ENCODE measurements at regions of chr4 and their contacts with region 1.

Region 1: DNA sequence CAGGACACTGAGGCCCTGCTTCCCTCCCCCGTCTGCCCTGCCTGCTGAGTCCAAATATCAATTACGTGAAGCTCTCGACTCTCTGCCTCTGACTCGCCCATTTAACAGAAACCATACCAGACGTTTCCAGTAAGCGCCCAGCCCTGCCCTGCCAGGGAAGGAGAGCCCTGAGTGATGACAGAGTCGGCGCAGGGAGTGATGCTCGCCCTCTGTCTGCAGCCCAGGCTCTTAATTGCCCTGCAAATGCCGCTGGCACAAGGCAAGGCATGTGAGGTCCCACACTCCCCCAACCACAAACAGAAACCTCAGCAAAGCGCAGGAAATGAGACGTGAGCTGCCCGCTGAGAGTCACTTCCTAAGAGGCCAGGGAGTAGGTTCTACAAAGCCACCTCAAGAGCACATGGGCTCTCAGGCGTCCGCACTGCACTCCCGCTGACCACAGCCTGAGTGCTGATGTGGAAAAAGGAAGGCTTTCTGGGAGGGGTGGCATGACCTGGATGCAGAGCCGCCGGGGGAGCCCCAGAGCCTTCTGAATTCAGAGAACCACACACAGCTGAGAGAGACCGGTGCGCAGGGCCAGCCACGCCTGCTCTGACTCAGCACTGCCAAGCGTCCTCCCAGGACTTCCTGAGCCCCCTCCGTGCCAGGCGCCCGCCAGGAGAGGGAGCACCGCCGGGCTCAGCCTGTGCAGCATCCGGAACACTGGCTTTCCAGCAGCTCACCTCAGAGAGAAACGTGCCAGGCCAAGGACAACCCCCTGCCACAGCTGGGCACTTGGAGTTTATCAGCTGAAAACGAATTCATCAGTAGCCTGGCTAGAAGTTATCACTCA is 5.3 kb downstream of the ZFYVE28 start:
- DNase-seq: peak; percentile 60 to 89 (median 85)
- ATAC-seq: peak; percentile 84
- H3K4me3 ChIP-seq: peak overlapping the region; percentile 29
- H3K4me3 Mint-ChIP-seq: peak overlapping the region; percentile 74 to 99 (median 84)
- H3K27ac ChIP-seq: peak overlapping the region; percentile 71
- H3K27ac Mint-ChIP-seq: peak overlapping the region; percentile 90 to 100 (median 96)
- H3K4me1 ChIP-seq: peaks cover 41 to 48% of the 10 kb centered on the region in 2 donors
- H3K4me1 Mint-ChIP-seq: peaks cover 35 to 75% (median 67%) of the 10 kb centered on the region in 7 donors
- H3K27me3 ChIP-seq: no peaks in the 10 kb centered on the region
- H3K27me3 Mint-ChIP-seq: peaks cover 0 to 25% (median 0%) of the 10 kb centered on the region in 5 donors

Region 2: DNA sequence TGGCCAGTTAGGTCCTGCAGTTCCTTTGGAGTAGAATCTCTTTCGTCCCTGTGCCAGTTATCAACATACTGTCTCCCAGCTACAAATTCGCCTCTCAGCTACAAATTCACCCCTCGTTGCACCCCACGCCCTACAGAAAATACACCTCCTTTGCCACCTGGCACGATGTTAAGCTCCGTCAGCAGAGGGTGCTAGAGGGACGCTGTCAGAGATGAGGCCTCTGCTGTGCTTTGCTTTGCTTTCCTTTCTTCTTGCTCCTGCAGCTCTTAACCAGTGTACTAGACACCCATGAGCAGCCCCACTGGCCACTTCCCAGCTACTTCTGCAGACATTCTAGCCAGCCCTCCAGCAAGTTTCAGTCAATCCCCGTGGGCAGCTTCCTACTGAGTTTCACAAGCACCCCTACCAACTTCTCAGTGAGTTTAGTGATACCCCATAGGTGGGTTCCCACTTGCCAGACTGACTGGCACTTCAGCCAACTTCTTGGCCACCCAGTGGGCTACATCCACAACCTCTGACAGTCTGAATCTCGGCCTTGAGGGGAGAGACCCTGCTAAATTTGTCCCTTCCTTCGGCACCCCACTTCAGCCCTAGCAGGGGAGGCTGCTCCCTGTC is 193.0 kb before region 1 on chr4:
- CTCF ChIA-PET with region 1: no interaction called
- POLR2A ChIA-PET with region 1: no interaction called
- intact Hi-C with region 1: loop called in 1 of 2 experiments (anchors 1 kb)
- DNase-seq: peak; percentile 61 to 84 (median 76)
- ATAC-seq: peak; percentile 96
- H3K4me3 ChIP-seq: no peak overlapping the region
- H3K4me3 Mint-ChIP-seq: no peak overlapping the region
- H3K27ac ChIP-seq: no peak overlapping the region
- H3K27ac Mint-ChIP-seq: peak overlapping the region in 2 of 9 donors; percentile 6 to 29
- H3K4me1 ChIP-seq: peaks cover 0 to 7% of the 10 kb centered on the region in 2 donors
- H3K4me1 Mint-ChIP-seq: peaks cover 0 to 17% (median 6%) of the 10 kb centered on the region in 7 donors
- H3K27me3 ChIP-seq: no peaks in the 10 kb centered on the region
- H3K27me3 Mint-ChIP-seq: no peaks in the 10 kb centered on the region

Region 3: DNA sequence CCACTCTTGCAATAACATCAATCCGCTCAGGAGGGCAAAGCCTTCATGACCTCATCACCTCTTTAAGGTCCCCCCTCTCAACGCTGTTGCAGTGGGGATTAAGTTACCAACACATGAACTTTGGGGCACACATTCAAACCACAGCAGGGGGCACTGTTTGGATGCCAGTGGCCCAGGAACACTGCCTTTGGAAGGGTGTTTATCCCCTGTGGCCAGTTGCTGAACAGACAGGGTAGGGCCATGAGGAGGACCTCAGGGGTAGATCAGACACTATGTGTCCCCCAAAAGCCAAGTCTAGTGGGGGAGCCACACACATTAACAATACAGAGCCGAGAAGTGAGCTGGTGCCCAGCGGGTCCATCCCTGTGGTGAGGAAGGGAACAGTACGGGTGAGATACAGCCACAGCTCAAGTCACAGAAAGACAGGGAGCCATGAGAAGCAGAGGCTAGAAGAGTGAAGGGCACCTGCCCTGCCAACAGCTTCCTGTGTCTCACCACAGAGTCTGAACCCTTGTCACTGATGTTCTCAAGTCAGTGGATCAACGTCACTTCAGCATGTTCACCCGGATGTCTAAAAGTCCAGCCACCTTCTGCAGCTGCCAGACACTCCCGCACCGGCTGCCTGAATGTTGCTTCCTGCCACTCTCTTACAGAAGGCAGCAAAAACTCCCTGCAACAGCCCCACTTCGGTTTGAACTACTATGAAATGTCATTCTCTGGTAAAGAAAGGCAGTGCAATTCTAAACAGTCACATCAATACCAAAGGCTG is 131.3 kb before region 1 on chr4:
- CTCF ChIA-PET with region 1: no interaction called
- POLR2A ChIA-PET with region 1: interaction called, 4 read pairs
- intact Hi-C with region 1: loop called (anchors 1 kb)
- DNase-seq: peak; percentile 51 to 96 (median 94)
- ATAC-seq: peak; percentile 95
- H3K4me3 ChIP-seq: peak overlapping the region; percentile 33
- H3K4me3 Mint-ChIP-seq: peak overlapping the region; percentile 73 to 90 (median 84)
- H3K27ac ChIP-seq: peak overlapping the region; percentile 81
- H3K27ac Mint-ChIP-seq: peak overlapping the region; percentile 91 to 100 (median 99)
- H3K4me1 ChIP-seq: peaks cover 31 to 34% of the 10 kb centered on the region in 2 donors
- H3K4me1 Mint-ChIP-seq: peaks cover 27 to 64% (median 50%) of the 10 kb centered on the region in 7 donors
- H3K27me3 ChIP-seq: no peaks in the 10 kb centered on the region
- H3K27me3 Mint-ChIP-seq: no peaks in the 10 kb centered on the region

Region 4: DNA sequence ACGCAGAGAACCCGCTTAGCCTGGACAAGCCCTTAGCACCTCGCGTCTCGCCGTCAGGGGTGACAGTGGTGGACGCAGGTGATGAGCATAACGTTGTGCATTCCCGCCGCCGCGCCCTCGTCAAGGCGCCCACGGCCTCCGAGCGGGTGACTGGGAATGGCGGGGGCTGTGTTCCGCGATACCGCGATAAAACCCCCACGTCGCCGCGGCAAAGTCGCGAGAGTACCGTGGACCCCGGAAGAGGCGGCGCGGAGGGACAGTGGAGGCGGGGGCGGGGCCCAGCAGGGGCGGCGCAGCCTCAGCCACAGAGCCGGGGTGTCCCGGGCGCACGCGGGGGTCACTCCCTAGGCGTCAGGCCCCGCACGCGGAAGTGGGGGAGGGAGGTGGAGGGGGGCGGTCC is 48.4 kb before region 1 on chr4:
- CTCF ChIA-PET with region 1: no interaction called
- POLR2A ChIA-PET with region 1: interaction called, 4 read pairs
- intact Hi-C with region 1: loop called in 1 of 2 experiments (anchors 1 kb)
- DNase-seq: peak; percentile 49 to 74 (median 61)
- ATAC-seq: peak; percentile 89
- H3K4me3 ChIP-seq: peak overlapping the region; percentile 79
- H3K4me3 Mint-ChIP-seq: peak overlapping the region; percentile 37 to 88 (median 78)
- H3K27ac ChIP-seq: peak overlapping the region; percentile 81
- H3K27ac Mint-ChIP-seq: peak overlapping the region in 8 of 9 donors; percentile 53 to 93 (median 81)
- H3K4me1 ChIP-seq: peaks cover 9 to 12% of the 10 kb centered on the region in 2 donors
- H3K4me1 Mint-ChIP-seq: peaks cover 0 to 31% (median 9%) of the 10 kb centered on the region in 7 donors
- H3K27me3 ChIP-seq: no peaks in the 10 kb centered on the region
- H3K27me3 Mint-ChIP-seq: no peaks in the 10 kb centered on the region

Region 5: DNA sequence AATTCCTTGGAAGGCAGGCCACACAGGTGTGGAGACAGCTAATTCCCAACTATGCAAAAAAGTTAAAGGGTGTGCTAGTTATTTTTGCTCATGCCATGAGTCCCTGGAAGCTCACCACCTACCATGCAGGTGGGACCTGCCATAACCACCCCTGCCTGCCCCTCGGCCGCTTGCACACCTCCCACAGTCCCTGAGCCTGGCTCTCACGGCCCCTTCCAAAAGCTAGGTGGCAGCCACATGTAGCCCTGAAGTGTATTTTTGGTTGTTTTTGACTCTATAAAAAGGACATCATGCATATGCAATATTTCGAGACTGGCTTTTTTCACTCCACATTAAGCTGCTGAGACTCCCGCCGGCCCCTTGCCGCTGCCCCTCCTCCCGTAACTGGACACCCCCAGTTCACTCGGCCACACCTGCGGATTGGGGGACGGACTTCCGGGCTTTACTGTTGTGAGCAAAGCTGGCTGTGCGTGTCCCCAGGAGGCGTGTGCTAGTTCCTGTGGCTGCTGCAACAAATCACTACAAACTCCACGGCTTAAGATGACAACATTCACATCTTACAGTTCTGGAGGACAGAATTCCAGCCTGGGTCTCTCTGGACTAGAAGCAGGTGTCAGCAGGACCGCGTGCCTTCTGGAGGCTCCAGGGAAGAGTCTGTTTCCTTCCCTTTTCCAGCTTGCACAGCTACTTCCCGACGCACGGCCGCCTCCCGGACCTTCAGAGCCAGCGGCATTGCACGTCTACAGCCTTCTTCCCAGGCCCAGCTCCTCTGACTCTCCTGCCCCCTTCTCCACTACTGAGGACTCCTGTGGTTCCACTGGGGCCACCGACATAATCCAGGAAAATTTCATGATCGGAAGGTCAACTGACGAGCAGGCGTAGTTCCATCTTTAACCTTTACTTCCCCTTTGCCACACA is 19.5 kb before region 1 on chr4:
- CTCF ChIA-PET with region 1: interaction called, 7 read pairs
- POLR2A ChIA-PET with region 1: interaction called, 20 read pairs
- intact Hi-C with region 1: loop called (anchors 2 kb)
- DNase-seq: peak in 4 of 9 donors; percentile 19 to 32 (median 22)
- ATAC-seq: peak; percentile 60
- H3K4me3 ChIP-seq: no peak overlapping the region
- H3K4me3 Mint-ChIP-seq: peak overlapping the region; percentile 47 to 86 (median 66)
- H3K27ac ChIP-seq: no peak overlapping the region
- H3K27ac Mint-ChIP-seq: peak overlapping the region in 4 of 9 donors; percentile 60 to 87 (median 83)
- H3K4me1 ChIP-seq: peaks cover 11 to 15% of the 10 kb centered on the region in 2 donors
- H3K4me1 Mint-ChIP-seq: peaks cover 20 to 45% (median 26%) of the 10 kb centered on the region in 7 donors
- H3K27me3 ChIP-seq: no peaks in the 10 kb centered on the region
- H3K27me3 Mint-ChIP-seq: peaks cover 0 to 44% (median 0%) of the 10 kb centered on the region in 5 donors

Region 6: GRCh38 chr4:2402029-2402428 is 11.1 kb before region 1 on chr4:
- CTCF ChIA-PET with region 1: interaction called, 6 read pairs
- POLR2A ChIA-PET with region 1: interaction called, 27 read pairs
- intact Hi-C with region 1: loop called in 1 of 2 experiments (anchors 2 kb)
- DNase-seq: peak in 2 of 9 donors; percentile 19 to 26
- ATAC-seq: peak; percentile 59
- H3K4me3 ChIP-seq: peak overlapping the region; percentile 53
- H3K4me3 Mint-ChIP-seq: peak overlapping the region; percentile 55 to 87 (median 83)
- H3K27ac ChIP-seq: no peak overlapping the region
- H3K27ac Mint-ChIP-seq: peak overlapping the region in 5 of 9 donors; percentile 43 to 86 (median 75)
- H3K4me1 ChIP-seq: peaks cover 16% of the 10 kb centered on the region in 2 donors
- H3K4me1 Mint-ChIP-seq: peaks cover 13 to 41% (median 28%) of the 10 kb centered on the region in 7 donors
- H3K27me3 ChIP-seq: no peaks in the 10 kb centered on the region
- H3K27me3 Mint-ChIP-seq: peaks cover 0 to 10% (median 0%) of the 10 kb centered on the region in 5 donors

Region 7: GRCh38 chr4:3047464-3048286 is 634.6 kb after region 1 on chr4:
- CTCF ChIA-PET with region 1: no interaction called
- POLR2A ChIA-PET with region 1: no interaction called
- intact Hi-C with region 1: loop called in 1 of 2 experiments (anchors 2 kb)
- DNase-seq: peak; percentile 40 to 75 (median 58)
- ATAC-seq: peak; percentile 79
- H3K4me3 ChIP-seq: peak overlapping the region; percentile 65
- H3K4me3 Mint-ChIP-seq: peak overlapping the region; percentile 62 to 92 (median 83)
- H3K27ac ChIP-seq: peak overlapping the region; percentile 61
- H3K27ac Mint-ChIP-seq: peak overlapping the region; percentile 79 to 90 (median 84)
- H3K4me1 ChIP-seq: peaks cover 16 to 18% of the 10 kb centered on the region in 2 donors
- H3K4me1 Mint-ChIP-seq: peaks cover 17 to 45% (median 35%) of the 10 kb centered on the region in 7 donors
- H3K27me3 ChIP-seq: no peaks in the 10 kb centered on the region
- H3K27me3 Mint-ChIP-seq: peaks cover 0 to 17% (median 0%) of the 10 kb centered on the region in 5 donors